ENCODE measurements at regions of chr5 and their contacts with region 1.

Region 1: DNA sequence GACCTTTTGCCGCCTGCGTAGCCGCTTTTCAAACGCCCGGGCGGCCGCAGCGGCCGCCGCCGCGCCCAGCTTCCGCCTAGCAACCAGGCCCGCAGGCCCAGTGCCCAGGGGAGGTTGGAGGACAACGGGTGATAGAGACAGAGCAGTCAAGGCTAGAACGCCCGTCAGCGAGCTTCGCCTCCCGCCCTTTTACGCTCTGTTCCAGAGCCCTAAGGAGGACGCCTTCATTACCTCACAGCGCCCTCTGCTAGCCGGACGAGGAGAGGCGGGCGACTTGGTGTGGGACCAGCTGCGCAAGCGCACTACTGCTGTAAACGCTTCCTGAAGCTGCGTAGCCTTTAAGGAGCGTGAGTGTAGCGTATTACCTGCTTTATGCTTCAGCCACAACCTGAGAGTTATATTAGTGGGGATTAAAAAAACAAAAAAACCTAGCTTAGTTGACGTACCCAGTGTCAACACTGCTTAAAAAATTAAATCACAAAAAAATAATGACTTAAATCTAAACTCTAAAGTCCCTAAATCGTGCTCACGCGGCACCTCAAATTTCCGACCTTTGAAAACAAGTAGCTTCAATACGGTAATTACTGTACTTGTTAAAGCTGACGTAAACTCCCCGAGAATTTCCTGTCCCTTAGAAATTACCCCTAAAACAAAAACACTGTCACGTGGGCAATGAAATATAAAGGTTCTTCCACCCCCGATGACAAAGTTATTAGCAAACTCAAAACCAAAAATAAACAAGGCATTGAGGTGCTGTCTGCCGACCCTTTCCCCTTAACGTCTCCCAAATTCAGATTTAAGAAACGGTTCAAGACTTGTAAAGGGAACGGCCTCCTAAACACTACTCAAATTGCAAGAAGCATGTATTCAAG is at the start of gene CEP120:
- DNase-seq: peak; percentile 89
- ATAC-seq: peak; percentile 95
- H3K4me3 Mint-ChIP-seq: no peak within 1 kb of the TSS
- H3K27ac Mint-ChIP-seq: no peak within 1 kb of the TSS
- H3K4me1 Mint-ChIP-seq: peaks cover 11% of the 10 kb centered on the region
- H3K27me3 Mint-ChIP-seq: no peaks in the 10 kb centered on the region
- CTCF ChIP-seq: no peak
- total RNA-seq, gene CEP120: 39.2 and 43.1 TPM in 2 replicates

Region 2: GRCh38 chr5:121962347-121962670 is 1461.2 kb before region 1 on chr5:
- CTCF ChIA-PET with region 1: no interaction called
- POLR2A ChIA-PET with region 1: no interaction called
- intact Hi-C with region 1: loop called (anchors 5 kb)
- DNase-seq: no peak
- ATAC-seq: no peak
- H3K4me3 Mint-ChIP-seq: peak overlapping the region; percentile 98
- H3K27ac Mint-ChIP-seq: peak overlapping the region; percentile 95
- H3K4me1 Mint-ChIP-seq: peaks cover 46% of the 10 kb centered on the region
- H3K27me3 Mint-ChIP-seq: peaks cover 6% of the 10 kb centered on the region
- CTCF ChIP-seq: no peak

Region 3: GRCh38 chr5:122774861-122775549 is 648.5 kb before region 1 on chr5 and contains the start of gene SNX2:
- CTCF ChIA-PET with region 1: no interaction called
- POLR2A ChIA-PET with region 1: no interaction called
- intact Hi-C with region 1: loop called (anchors 1 kb)
- DNase-seq: peak; percentile 96
- ATAC-seq: peak; percentile 86
- H3K4me3 Mint-ChIP-seq: peak within 1 kb of the TSS; percentile 97
- H3K27ac Mint-ChIP-seq: peak within 1 kb of the TSS; percentile 96
- H3K4me1 Mint-ChIP-seq: peaks cover 39% of the 10 kb centered on the region
- H3K27me3 Mint-ChIP-seq: no peaks in the 10 kb centered on the region
- CTCF ChIP-seq: no peak
- total RNA-seq, gene SNX2: 145 and 146 TPM in 2 replicates

Region 4: GRCh38 chr5:123398058-123398733 is 25.3 kb before region 1 on chr5:
- CTCF ChIA-PET with region 1: interaction called, 10 read pairs
- POLR2A ChIA-PET with region 1: interaction called, 24 read pairs
- intact Hi-C with region 1: loop called (anchors 1 kb)
- DNase-seq: peak; percentile 15
- ATAC-seq: peak; percentile 98
- H3K4me3 Mint-ChIP-seq: peak overlapping the region; percentile 7
- H3K27ac Mint-ChIP-seq: peak overlapping the region; percentile 89
- H3K4me1 Mint-ChIP-seq: peaks cover 26% of the 10 kb centered on the region
- H3K27me3 Mint-ChIP-seq: no peaks in the 10 kb centered on the region
- CTCF ChIP-seq: no peak

Region 5: DNA sequence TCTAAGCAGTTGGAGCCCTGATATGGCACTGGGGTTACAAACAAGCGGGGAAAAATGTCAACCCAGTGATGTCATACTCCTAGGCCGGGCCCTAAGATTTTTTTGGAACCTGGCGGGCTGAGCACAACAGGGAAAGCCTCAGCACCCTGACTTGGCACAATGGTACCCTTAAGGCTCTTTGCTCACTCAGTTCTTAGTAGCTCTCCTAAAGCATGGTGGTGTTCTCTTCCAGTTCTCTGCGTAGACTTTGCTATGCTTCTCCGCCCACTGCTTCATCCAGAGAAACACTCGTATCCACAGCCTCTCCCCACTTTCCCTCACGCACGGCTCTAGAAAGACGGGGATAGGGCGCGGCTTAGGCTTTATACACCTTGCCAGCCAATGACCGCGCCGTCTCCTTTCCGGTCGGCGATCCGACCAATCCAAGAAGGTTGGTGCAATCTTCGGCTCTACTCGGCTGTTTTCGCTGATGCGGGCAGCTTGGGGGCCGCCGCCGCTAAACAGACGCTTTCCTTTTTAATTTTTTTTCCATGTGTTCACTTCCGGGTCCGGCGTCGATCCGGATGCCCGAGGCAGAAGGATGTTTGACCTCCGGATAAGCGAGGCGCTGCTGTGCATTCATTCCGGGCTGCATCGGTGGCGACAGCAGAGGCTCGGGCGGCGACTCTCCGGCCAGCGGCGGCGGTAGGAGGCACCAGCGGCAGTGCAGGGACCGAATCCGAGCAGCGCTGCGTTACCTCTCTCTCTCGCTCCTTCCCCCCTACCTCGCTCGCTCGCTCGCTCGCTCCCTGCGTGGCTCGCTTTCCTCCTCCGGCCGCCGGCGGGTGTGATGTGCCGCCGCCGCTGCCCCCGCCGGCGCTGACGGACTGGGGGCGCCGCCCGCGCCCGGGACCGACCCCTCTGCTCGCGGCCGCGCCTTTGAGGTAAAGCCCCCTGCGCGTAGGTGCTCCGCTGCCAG is 88.4 kb after region 1 on chr5 and contains the start of gene CSNK1G3:
- CTCF ChIA-PET with region 1: interaction called, 12 read pairs
- POLR2A ChIA-PET with region 1: interaction called, 108 read pairs
- intact Hi-C with region 1: loop called (anchors 1 kb)
- DNase-seq: peak; percentile 81
- ATAC-seq: peak; percentile 91
- H3K4me3 Mint-ChIP-seq: peak within 1 kb of the TSS; percentile 99
- H3K27ac Mint-ChIP-seq: peak within 1 kb of the TSS; percentile 99
- H3K4me1 Mint-ChIP-seq: peaks cover 47% of the 10 kb centered on the region
- H3K27me3 Mint-ChIP-seq: no peaks in the 10 kb centered on the region
- CTCF ChIP-seq: no peak
- total RNA-seq, gene CSNK1G3: 79.9 and 82.7 TPM in 2 replicates

Region 6: GRCh38 chr5:123545506-123545905 is 122.0 kb after region 1 on chr5:
- CTCF ChIA-PET with region 1: interaction called, 10 read pairs
- POLR2A ChIA-PET with region 1: interaction called, 44 read pairs
- intact Hi-C with region 1: loop called (anchors 1 kb)
- DNase-seq: no peak
- ATAC-seq: no peak
- H3K4me3 Mint-ChIP-seq: no peak overlapping the region
- H3K27ac Mint-ChIP-seq: no peak overlapping the region
- H3K4me1 Mint-ChIP-seq: peaks cover 76% of the 10 kb centered on the region
- H3K27me3 Mint-ChIP-seq: no peaks in the 10 kb centered on the region
- CTCF ChIP-seq: no peak

Region 7: DNA sequence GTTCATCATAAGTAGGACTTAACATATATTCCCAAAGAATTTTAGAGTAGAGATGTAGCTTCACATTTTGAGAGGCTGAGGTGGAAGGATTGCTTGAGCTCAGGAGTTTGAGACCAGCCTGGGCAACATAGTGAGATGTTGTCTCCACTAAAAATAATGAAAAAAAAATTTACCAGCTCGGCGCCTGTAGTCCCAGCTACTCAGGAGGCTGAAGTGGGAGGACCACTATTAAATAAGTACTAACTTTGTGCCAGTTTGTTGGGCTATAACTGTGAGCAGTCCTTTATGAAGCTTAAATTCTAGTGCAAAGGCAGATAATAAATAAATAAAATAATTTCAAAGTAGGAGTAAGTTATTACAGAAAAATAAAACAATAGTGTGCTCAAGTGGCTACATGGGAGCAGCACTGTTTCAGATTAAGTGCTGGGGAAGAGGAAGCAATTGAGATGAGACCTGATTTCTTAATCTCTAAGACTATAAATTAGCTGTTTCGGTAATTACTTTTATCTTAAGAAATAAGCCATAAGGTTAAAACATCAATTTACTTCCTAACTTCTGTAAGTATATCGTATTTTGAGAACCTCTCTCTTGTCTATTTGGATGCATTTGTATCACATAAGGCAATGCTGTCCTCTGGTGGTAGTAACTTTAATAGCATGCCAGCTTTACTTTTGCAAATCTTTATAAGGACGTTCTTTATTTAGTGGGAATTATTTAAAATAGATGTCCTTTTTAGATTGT is 187.3 kb after region 1 on chr5:
- CTCF ChIA-PET with region 1: interaction called, 43 read pairs
- POLR2A ChIA-PET with region 1: interaction called, 30 read pairs
- intact Hi-C with region 1: loop called (anchors 1 kb)
- DNase-seq: no peak
- ATAC-seq: peak; percentile 73
- H3K4me3 Mint-ChIP-seq: no peak overlapping the region
- H3K27ac Mint-ChIP-seq: peak overlapping the region; percentile 72
- H3K4me1 Mint-ChIP-seq: peaks cover 7% of the 10 kb centered on the region
- H3K27me3 Mint-ChIP-seq: no peaks in the 10 kb centered on the region
- CTCF ChIP-seq: peak; percentile 100

Region 8: GRCh38 chr5:124071039-124071438 is 647.5 kb after region 1 on chr5:
- CTCF ChIA-PET with region 1: no interaction called
- POLR2A ChIA-PET with region 1: no interaction called
- intact Hi-C with region 1: no loop called
- DNase-seq: no peak
- ATAC-seq: no peak
- H3K4me3 Mint-ChIP-seq: no peak overlapping the region
- H3K27ac Mint-ChIP-seq: no peak overlapping the region
- H3K4me1 Mint-ChIP-seq: peaks cover 17% of the 10 kb centered on the region
- H3K27me3 Mint-ChIP-seq: peaks cover 2% of the 10 kb centered on the region
- CTCF ChIP-seq: no peak